AG04450 (cell line): ENCODE measurements at regions of chr11 and their contacts with region 1.

Region 1: DNA sequence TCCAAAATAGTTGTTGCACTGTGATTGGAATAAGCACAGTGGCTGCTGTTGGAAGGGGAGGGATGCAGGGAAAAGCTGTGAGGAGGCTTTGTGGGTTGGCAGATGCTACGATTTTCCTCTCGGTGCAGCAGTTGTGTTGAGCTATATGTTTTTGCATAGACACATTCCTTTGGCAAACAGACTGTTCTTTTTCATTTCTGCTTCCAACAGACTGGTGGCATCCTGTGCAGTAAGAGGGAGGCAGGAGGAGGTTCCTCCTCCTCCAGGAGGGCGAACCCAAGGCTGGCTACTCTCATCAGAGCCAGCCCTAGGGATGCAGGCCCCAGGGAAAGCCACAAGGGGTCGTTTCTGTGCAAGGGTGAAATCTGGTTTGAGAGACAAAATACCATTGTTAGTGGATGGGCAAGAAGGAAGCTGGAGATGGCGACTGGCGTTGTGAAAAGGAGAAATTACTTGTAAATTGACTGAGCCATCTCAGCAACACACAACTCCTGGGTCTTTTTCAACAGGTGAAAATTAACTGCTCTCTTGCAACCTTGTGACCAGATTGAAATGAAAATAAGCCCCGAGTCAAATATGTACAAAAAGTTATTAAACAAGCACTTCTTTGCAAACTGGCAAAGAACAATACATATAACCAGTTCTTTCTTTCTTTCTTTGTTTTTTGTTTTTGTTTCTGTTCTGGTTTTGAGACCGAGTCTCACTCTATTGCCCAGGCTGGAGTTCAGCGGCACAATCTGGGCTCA is 26.5 kb upstream of the UBASH3B start:
- DNase-seq: peak; percentile 51
- H3K4me3 ChIP-seq: no peak overlapping the region
- H3K27ac ChIP-seq: peak overlapping the region; percentile 21
- H3K27me3 ChIP-seq: peaks cover 3% of the 10 kb centered on the region
- CTCF ChIP-seq: peak; percentile 98

Region 2: GRCh38 chr11:122601141-122602125 is 27.6 kb before region 1 on chr11:
- CTCF ChIA-PET with region 1: interaction called, 19 read pairs
- POLR2A ChIA-PET with region 1: no interaction called
- DNase-seq: no peak
- H3K4me3 ChIP-seq: no peak overlapping the region
- H3K27ac ChIP-seq: no peak overlapping the region
- H3K27me3 ChIP-seq: peaks cover 15% of the 10 kb centered on the region
- CTCF ChIP-seq: no peak

Region 3: DNA sequence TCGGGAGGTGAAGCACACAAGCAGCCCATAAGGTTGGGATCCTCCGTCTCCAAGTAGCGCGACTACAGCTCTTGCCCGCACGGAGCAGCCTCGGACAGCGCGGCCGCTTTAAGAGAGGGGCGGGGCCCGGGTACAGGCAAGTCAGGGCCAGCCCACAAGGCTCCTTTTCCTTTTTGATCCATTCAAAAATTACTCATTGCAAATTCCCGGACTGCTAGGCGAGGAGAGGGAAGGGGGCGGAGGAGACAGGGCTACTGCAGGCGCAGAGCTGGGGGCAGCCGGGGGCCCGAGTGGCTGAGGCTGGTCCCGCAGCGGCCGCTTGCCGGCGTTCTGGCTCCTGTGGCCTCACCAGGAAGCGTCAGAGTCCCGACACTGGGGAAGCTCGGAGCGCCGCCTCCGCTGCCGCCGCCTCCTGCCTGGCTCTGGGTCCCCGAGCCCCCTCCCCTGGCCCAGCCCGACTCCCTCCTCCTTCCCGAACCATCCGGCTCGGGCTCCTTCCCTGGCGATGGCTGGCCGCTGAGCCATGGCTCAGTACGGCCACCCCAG is 26.6 kb after region 1 on chr11 and contains the start of gene UBASH3B:
- CTCF ChIA-PET with region 1: interaction called, 10 read pairs
- POLR2A ChIA-PET with region 1: no interaction called
- DNase-seq: no peak
- H3K4me3 ChIP-seq: peak within 1 kb of the TSS; percentile 84
- H3K27ac ChIP-seq: peak within 1 kb of the TSS; percentile 89
- H3K27me3 ChIP-seq: no peaks in the 10 kb centered on the region
- CTCF ChIP-seq: no peak
- polyA plus RNA-seq, gene UBASH3B: 19.1 and 25.0 TPM in 2 replicates

Region 4: GRCh38 chr11:122788781-122789535 is 160.0 kb after region 1 on chr11:
- CTCF ChIA-PET with region 1: interaction called, 106 read pairs
- POLR2A ChIA-PET with region 1: interaction called, 3 read pairs
- DNase-seq: no peak
- H3K4me3 ChIP-seq: no peak overlapping the region
- H3K27ac ChIP-seq: no peak overlapping the region
- H3K27me3 ChIP-seq: no peaks in the 10 kb centered on the region
- CTCF ChIP-seq: peak; percentile 18; the same call in 1 of the 2 replicates

Region 5: DNA sequence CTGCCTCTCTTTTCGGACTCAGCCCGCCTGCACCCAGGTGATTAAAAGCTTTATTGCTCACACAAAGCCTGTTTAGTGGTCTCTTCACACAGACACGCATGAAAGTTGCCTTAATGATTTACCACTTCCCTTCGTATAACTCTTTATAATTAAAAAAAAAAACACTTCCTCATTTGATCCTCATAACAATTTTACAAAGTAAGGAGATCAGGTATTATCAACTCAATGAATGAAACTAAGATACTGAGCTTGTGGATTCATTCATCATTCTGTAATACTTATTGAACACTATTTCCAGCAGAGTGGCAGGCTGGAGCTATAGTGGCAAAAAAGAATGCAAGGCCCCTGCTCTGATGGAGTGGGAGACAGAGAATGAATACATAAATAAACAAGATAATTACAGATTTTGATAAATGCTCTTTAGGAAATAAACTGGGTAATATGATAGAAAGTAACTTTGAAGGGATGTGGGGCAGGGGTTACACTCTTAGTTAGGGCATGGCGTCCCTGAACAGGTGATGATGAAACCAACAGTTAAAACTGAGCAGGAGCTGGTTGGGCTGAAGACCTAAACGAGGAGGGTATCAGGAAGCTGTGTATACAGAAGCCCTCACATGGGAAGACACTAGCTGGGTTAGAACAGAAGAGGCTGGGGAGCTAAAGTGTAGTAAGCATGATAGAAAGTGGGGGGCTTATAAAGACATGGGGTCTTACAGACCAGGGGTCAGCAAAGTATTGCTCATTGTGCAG is 203.9 kb after region 1 on chr11:
- CTCF ChIA-PET with region 1: interaction called, 10 read pairs
- POLR2A ChIA-PET with region 1: no interaction called
- DNase-seq: no peak
- H3K4me3 ChIP-seq: no peak overlapping the region
- H3K27ac ChIP-seq: no peak overlapping the region
- H3K27me3 ChIP-seq: no peaks in the 10 kb centered on the region
- CTCF ChIP-seq: no peak

Region 6: GRCh38 chr11:122863704-122864326 is 234.8 kb after region 1 on chr11:
- CTCF ChIA-PET with region 1: interaction called, 503 read pairs
- POLR2A ChIA-PET with region 1: no interaction called
- DNase-seq: no peak
- H3K4me3 ChIP-seq: no peak overlapping the region
- H3K27ac ChIP-seq: no peak overlapping the region
- H3K27me3 ChIP-seq: peaks cover 22% of the 10 kb centered on the region
- CTCF ChIP-seq: peak; percentile 93